ENCODE measurements at regions of chr14 and their contacts with region 1.

Region 1: GRCh38 chr14:77457522-77458290 is at the starts of genes AHSA1 and VIPAS39:
- DNase-seq: peak; percentile 99
- ATAC-seq: peak; percentile 97
- H3K4me3 ChIP-seq: peak within 1 kb of the TSS; percentile 69
- H3K27ac ChIP-seq: peak within 1 kb of the TSS; percentile 92
- H3K4me1 ChIP-seq: peaks cover 3% of the 10 kb centered on the region
- H3K27me3 ChIP-seq: no peaks in the 10 kb centered on the region
- CTCF ChIP-seq: no peak
- POLR2A ChIP-seq: peak; percentile 88
- RAD21 ChIP-seq: no peak
- total RNA-seq, gene AHSA1: 152 and 166 TPM in 2 replicates
- total RNA-seq, gene VIPAS39: 32.2 and 43.0 TPM in 2 replicates

Region 2: DNA sequence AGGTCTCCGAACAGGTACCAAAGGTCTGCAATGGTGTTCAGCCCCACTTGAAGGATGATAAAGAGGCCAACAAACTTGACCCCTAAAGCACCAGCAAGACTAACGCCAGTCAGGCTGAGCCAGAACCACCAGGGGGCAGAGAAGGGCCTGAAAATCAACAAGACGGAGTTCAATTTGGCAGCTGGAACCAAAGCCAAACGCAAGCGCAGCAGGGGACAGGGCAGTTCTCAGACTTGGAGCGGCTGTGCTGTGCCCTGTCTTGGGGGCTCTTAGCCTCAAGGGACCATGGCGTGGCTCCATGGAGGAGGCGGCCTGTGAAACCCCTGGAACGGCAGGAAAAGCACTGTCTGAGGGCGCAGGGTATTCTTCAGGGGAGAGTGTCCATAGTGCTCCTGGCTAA is 156.6 kb before region 1 on chr14:
- CTCF ChIA-PET with region 1: no interaction called
- POLR2A ChIA-PET with region 1: no interaction called
- dilution Hi-C with region 1: no loop called
- in situ Hi-C with region 1: no loop called
- intact Hi-C with region 1: loop called (anchors 1 kb)
- DNase-seq: peak; percentile 85
- ATAC-seq: peak; percentile 81
- H3K4me3 ChIP-seq: no peak overlapping the region
- H3K27ac ChIP-seq: no peak overlapping the region
- H3K4me1 ChIP-seq: peaks cover 10% of the 10 kb centered on the region
- H3K27me3 ChIP-seq: no peaks in the 10 kb centered on the region
- CTCF ChIP-seq: peak; percentile 91
- POLR2A ChIP-seq: no peak
- RAD21 ChIP-seq: peak; percentile 86

Region 3: GRCh38 chr14:77376771-77377501 is 80.8 kb before region 1 on chr14 and contains the starts of genes SAMD15 and TMED8:
- CTCF ChIA-PET with region 1: no interaction called
- POLR2A ChIA-PET with region 1: no interaction called
- dilution Hi-C with region 1: no loop called
- in situ Hi-C with region 1: no loop called
- intact Hi-C with region 1: loop called (anchors 1 kb)
- DNase-seq: peak; percentile 80
- ATAC-seq: peak; percentile 98
- H3K4me3 ChIP-seq: peak within 1 kb of the TSS; percentile 86
- H3K27ac ChIP-seq: peak within 1 kb of the TSS; percentile 93
- H3K4me1 ChIP-seq: no peaks in the 10 kb centered on the region
- H3K27me3 ChIP-seq: peaks cover 7% of the 10 kb centered on the region
- CTCF ChIP-seq: peak; percentile 24; the same call in 1 of the 2 replicates
- POLR2A ChIP-seq: no peak
- RAD21 ChIP-seq: no peak
- total RNA-seq, gene SAMD15: 1.3 and 1.7 TPM in 2 replicates
- total RNA-seq, gene TMED8: 5.0 and 6.9 TPM in 2 replicates

Region 4: DNA sequence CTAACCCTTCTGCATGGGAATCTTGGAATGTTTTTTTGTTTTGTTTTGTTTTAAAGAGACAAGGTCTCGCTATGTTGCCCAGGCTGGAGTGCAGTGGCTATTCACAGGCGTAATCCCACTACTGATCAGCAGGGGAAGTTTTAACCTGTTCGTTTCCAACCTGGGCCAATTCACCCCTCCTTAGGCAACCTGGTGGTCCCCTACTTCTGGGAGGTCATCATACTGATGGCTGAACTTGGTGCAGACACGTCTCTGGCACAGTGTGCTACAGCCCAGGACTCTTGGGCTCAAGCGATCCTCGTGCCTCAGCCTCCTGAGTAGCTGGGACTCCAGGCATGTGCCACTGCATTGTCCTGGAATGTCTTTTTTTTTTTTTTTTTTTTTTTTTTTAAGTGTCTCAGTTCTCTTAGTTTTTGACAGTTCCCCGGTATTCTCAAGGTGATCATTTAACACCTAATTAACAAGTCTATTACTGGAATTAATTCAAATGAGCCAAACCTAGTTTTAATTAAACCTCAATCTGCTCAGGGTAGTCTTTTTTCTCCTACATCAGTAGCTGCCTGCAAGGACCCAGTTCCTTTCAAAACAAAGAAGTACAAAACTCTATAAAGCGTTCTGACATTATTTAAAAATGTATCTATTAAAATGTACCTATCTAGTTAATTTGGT is 89.9 kb after region 1 on chr14:
- CTCF ChIA-PET with region 1: interaction called, 4 read pairs
- POLR2A ChIA-PET with region 1: no interaction called
- dilution Hi-C with region 1: no loop called
- in situ Hi-C with region 1: loop called (anchors 5 kb)
- intact Hi-C with region 1: loop called (anchors 1 kb)
- DNase-seq: no peak
- ATAC-seq: no peak
- H3K4me3 ChIP-seq: no peak overlapping the region
- H3K27ac ChIP-seq: no peak overlapping the region
- H3K4me1 ChIP-seq: peaks cover 5% of the 10 kb centered on the region; the same call in 1 of the 2 replicates
- H3K27me3 ChIP-seq: no peaks in the 10 kb centered on the region
- CTCF ChIP-seq: no peak
- POLR2A ChIP-seq: no peak
- RAD21 ChIP-seq: no peak

Region 5: DNA sequence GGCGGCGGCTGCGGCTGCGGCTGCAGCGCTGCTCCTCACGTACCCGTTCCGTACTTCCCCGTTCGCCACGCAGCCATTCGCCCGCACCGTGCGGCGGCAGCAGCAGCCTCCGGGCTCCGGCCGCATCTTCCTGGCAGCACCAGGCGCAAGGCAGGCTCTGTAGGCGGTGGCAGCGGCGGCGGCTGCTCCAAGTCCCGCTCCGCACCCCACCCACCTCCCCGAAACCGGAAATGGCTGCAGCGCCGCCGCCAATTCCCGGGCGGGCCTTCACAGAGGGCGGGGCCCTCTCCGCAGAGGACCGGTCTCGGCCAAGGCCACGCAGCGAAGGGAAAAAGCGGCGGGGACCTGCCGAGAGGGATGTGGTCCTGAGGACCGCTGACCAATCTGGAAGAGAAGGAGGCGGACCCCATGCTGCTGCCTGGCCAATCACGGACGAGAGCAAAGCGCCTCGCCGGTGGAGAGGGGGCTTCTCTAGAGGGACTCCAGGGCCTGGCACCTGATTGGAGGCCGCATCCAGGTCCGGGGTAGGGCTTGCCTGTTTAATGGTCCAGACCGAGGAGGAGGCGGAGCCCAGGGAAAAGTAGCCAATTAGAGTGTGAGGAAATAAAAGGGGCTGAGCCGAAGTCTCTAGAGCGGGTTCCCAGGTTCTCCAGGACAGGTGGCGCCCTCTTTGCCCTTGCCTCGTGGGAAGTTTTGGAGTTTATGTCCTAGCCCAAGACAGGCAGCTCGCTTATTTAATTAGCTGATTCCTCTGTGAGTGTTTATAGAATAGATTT is 158.9 kb after region 1 on chr14 and contains the start of gene SPTLC2:
- CTCF ChIA-PET with region 1: no interaction called
- POLR2A ChIA-PET with region 1: no interaction called
- dilution Hi-C with region 1: no loop called
- in situ Hi-C with region 1: no loop called
- intact Hi-C with region 1: loop called (anchors 1 kb)
- DNase-seq: peak; percentile 99
- ATAC-seq: peak; percentile 96
- H3K4me3 ChIP-seq: peak within 1 kb of the TSS; percentile 95
- H3K27ac ChIP-seq: peak within 1 kb of the TSS; percentile 69
- H3K4me1 ChIP-seq: no peaks in the 10 kb centered on the region
- H3K27me3 ChIP-seq: no peaks in the 10 kb centered on the region
- CTCF ChIP-seq: 0 out of 2 replicates have a peak, but pooled peaks have one; percentile 15
- POLR2A ChIP-seq: peak; percentile 84
- RAD21 ChIP-seq: no peak
- total RNA-seq, gene SPTLC2: 68.3 and 100.0 TPM in 2 replicates

Region 6: GRCh38 chr14:77799863-77800730 is 342.4 kb after region 1 on chr14 and contains the start of gene ADCK1:
- CTCF ChIA-PET with region 1: no interaction called
- POLR2A ChIA-PET with region 1: no interaction called
- dilution Hi-C with region 1: no loop called
- in situ Hi-C with region 1: no loop called
- intact Hi-C with region 1: loop called (anchors 5 kb)
- DNase-seq: peak; percentile 68
- ATAC-seq: peak; percentile 88
- H3K4me3 ChIP-seq: peak within 1 kb of the TSS; percentile 61
- H3K27ac ChIP-seq: peak within 1 kb of the TSS; percentile 46
- H3K4me1 ChIP-seq: peaks cover 3% of the 10 kb centered on the region
- H3K27me3 ChIP-seq: no peaks in the 10 kb centered on the region
- CTCF ChIP-seq: peak; percentile 42
- POLR2A ChIP-seq: no peak
- RAD21 ChIP-seq: peak; percentile 16; the same call in 1 of the 2 replicates
- total RNA-seq, gene ADCK1: 1.1 and 1.6 TPM in 2 replicates